ENCODE measurements at regions of chr7 and their contacts with region 1.

Region 1: GRCh38 chr7:45160417-45160881 is 2.9 kb downstream of the RAMP3 start:
- ATAC-seq: peak in 3 of 8 experiments; percentile 38 to 48 (median 39)
- H3K4me3 ChIP-seq: no peak overlapping the region
- H3K27ac ChIP-seq: no peak overlapping the region
- H3K4me1 ChIP-seq: peaks cover 4 to 8% of the 10 kb centered on the region in 2 donors

Region 2: DNA sequence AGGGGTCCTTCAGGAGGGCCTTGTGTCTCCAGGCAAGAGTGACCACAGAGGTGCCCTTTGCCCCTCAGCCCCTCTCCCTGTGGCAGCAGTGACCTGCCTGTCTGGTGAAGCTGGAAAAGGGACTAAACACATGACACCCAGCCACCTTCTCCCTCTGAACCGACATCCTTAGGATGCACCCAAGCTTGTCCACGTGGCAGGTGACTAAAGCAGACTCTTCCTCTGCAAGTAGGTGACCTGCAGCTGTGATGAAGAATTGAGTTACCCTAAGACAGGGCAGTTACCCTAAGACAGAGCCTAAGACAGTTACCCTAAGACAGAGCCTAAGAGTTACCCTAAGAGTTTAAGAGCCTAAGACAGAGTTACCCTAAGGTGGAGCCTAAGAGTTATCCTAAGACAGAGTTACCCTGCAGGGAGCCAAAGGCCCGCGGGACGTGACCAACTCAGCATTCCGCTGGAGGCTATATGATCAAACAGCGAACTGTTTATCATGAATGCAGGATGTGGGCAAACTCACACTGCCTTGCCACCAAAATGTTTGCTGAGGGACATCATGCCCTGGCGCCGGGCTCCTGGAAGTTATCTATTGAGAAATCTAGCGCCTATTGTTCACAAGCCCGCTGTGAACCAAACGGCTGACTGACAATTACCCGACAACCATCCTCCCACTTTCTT is 1352.2 kb before region 1 on chr7:
- in situ Hi-C with region 1: no loop called
- ATAC-seq: no peak
- H3K4me3 ChIP-seq: no peak overlapping the region
- H3K27ac ChIP-seq: no peak overlapping the region
- H3K4me1 ChIP-seq: peaks cover 2 to 5% of the 10 kb centered on the region in 2 donors

Region 3: GRCh38 chr7:45052011-45052410 is 108.4 kb before region 1 on chr7:
- in situ Hi-C with region 1: no loop called
- ATAC-seq: peak in 1 of 8 experiments; percentile 24
- H3K4me3 ChIP-seq: no peak overlapping the region
- H3K27ac ChIP-seq: no peak overlapping the region
- H3K4me1 ChIP-seq: no peaks in the 10 kb centered on the region

Region 4: GRCh38 chr7:45259966-45260646 is 99.7 kb after region 1 on chr7:
- in situ Hi-C with region 1: loop called in 3 of 9 experiments (anchors 10 to 25 kb)
- ATAC-seq: peak in 7 of 8 experiments; percentile 47 to 96 (median 70)
- H3K4me3 ChIP-seq: no peak overlapping the region
- H3K27ac ChIP-seq: no peak overlapping the region
- H3K4me1 ChIP-seq: no peaks in the 10 kb centered on the region

Region 5: DNA sequence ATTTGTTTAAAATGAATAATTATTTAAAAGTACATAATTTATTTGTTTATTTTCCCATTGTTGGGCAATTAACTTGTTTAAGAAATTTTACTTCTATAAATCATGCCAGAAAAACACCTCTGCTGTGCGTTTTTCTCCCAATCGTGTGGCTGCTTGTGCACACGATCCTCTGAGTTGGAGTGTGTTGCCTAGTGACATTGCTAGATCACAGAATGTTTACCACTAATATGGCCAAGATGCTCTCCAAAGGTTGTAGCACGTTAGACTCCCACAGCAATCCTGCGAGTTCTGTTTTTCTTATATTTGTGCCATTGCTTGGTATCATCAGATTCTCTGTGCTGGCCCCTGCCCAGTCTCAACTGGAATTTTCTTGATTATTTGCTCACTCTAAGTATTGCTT is 206.6 kb after region 1 on chr7:
- in situ Hi-C with region 1: no loop called
- ATAC-seq: no peak
- H3K4me3 ChIP-seq: no peak overlapping the region
- H3K27ac ChIP-seq: no peak overlapping the region
- H3K4me1 ChIP-seq: no peaks in the 10 kb centered on the region

Region 6: GRCh38 chr7:45391618-45392451 is 231.4 kb after region 1 on chr7:
- in situ Hi-C with region 1: no loop called
- ATAC-seq: no peak
- H3K4me3 ChIP-seq: no peak overlapping the region
- H3K27ac ChIP-seq: no peak overlapping the region
- H3K4me1 ChIP-seq: no peaks in the 10 kb centered on the region

Region 7: DNA sequence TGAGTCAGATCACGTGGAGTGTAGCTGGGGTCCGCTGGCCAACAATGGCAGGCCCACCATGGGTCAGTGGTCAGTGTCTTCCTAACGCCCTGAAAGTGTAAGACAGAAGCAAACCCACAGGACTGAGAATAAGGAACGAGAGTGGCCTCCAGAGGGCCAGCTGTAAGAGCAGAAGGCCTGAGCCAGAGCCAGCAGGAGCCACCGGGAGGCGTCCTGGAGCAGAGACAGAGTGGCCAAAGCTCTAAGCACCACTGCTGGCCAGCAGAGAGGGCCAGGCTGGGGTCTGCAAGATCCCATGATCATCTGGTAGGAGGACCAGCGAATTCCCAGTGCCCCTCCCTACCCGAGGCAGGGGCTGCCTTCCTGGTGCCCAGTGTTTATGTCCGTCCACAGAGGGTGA is 703.3 kb after region 1 on chr7:
- in situ Hi-C with region 1: loop called in 6 of 9 experiments (anchors 10 to 25 kb)
- ATAC-seq: peak in 1 of 8 experiments; percentile 57
- H3K4me3 ChIP-seq: no peak overlapping the region
- H3K27ac ChIP-seq: no peak overlapping the region
- H3K4me1 ChIP-seq: no peaks in the 10 kb centered on the region

Region 8: GRCh38 chr7:45872116-45873034 is 711.9 kb after region 1 on chr7:
- in situ Hi-C with region 1: loop called in 6 of 9 experiments (anchors 10 to 25 kb)
- ATAC-seq: peak in 2 of 8 experiments; percentile 56 to 59
- H3K4me3 ChIP-seq: no peak overlapping the region
- H3K27ac ChIP-seq: no peak overlapping the region
- H3K4me1 ChIP-seq: no peaks in the 10 kb centered on the region

Measured in motor neuron (in vitro differentiated cells).